ENCODE measurements at regions of chr16 and their contacts with region 1.

Region 1: GRCh38 chr16:69861292-69862030 is 89.7 kb upstream of the CLEC18A start:
- DNase-seq: peak; percentile 50
- H3K4me3 ChIP-seq: no peak overlapping the region
- H3K27ac ChIP-seq: peak overlapping the region; percentile 30 to 70
- H3K4me1 ChIP-seq: peaks cover 2% of the 10 kb centered on the region
- H3K27me3 ChIP-seq: no peaks in the 10 kb centered on the region
- CTCF ChIP-seq: no peak
- POLR2A ChIP-seq: no peak

Region 2: DNA sequence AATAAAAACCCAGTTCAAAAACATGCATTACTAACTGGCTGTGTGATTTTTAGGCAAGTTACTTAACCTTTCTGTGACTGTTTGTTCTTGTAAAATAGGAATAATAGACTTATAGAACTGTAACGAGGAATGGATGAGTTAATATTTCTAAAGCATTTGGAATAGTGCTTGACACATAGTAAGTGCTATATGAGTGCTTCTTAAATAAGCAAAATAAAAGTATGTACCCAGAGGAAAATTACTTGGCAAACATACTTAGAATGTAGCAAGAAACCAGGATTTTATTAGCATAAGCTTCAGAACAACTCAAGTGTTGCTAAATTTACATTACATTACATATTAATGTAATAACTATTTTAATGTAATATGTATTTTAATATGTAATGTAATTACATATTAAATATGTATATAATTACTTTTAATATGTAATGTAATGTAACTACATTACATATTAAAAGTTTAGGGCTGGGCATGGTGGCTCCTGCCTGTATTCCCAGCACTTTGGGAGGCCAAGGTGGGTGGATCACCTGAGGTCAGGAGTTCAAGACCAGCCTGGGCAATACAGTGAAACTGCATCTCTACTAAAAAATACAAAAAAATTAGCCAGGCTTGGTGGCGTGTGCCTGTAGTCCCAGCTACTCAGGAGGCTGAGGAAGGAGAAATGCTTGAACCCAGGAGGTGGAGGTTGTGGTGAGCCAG is 281.5 kb before region 1 on chr16:
- intact Hi-C with region 1: loop called (anchors 10 kb)
- DNase-seq: no peak
- H3K4me3 ChIP-seq: no peak overlapping the region
- H3K27ac ChIP-seq: no peak overlapping the region
- H3K4me1 ChIP-seq: no peaks in the 10 kb centered on the region
- H3K27me3 ChIP-seq: no peaks in the 10 kb centered on the region
- CTCF ChIP-seq: no peak
- POLR2A ChIP-seq: no peak

Region 3: GRCh38 chr16:69796351-69797118 is 64.9 kb before region 1 on chr16:
- intact Hi-C with region 1: loop called (anchors 5 kb)
- DNase-seq: peak; percentile 36
- H3K4me3 ChIP-seq: no peak overlapping the region
- H3K27ac ChIP-seq: no peak overlapping the region
- H3K4me1 ChIP-seq: no peaks in the 10 kb centered on the region
- H3K27me3 ChIP-seq: no peaks in the 10 kb centered on the region
- CTCF ChIP-seq: peak; percentile 80 to 94 (median 90)
- POLR2A ChIP-seq: no peak

Region 4: DNA sequence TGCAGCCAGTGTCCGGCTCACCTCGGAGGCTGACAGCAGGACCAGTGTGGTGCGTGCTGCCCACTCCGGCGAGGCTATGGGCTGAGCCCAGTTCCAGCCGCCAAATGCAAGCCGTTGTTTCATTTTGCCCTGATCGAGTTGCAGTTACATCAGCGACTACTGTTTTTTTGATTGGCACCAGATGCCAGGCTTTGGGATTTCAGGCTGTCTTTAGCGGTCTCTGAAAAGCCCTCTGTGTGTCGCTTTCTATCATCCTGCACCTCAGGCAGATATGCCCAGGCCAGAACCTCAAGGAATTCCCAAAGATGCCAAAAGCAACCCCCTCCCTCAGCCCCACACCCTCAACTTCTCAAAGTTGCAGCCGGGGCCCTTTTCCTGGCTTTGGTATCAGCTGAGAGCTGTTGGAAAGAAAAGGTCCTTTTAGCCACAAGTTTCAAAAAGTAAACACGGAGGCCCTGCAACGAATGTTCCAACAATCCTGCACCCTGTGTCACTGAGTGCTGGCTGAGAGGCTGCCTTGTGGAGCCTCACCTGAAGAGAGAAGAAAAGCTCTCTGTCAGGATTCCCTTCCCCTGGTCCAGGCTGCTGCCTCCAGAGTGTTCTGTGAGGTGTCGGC is 40.4 kb before region 1 on chr16:
- intact Hi-C with region 1: no loop called
- DNase-seq: peak; percentile 31
- H3K4me3 ChIP-seq: no peak overlapping the region
- H3K27ac ChIP-seq: peak overlapping the region; percentile 17 to 27
- H3K4me1 ChIP-seq: peaks cover 6% of the 10 kb centered on the region
- H3K27me3 ChIP-seq: no peaks in the 10 kb centered on the region
- CTCF ChIP-seq: no peak
- POLR2A ChIP-seq: no peak

Region 5: DNA sequence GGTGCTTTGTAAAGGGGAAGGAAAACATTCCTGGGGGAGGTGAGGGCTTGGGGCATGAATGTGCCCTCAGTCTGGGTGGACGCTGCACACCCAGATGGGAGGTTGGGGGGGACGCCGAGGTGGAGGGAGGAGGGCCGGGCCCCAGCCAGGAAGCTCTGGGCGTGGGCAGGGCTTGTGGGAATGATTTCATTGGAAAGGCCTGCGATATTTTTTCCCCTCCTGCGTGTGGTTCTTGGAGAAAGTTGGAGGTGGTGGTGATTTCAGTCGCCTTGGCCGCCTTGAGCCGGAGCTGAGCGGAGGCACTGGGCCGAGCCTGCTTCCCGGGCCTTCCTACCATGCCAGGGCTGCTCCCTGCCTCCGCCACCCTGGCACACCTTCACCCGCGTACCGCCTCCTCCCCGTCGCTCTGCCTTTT is 63.3 kb after region 1 on chr16:
- intact Hi-C with region 1: loop called (anchors 5 kb)
- DNase-seq: no peak
- H3K4me3 ChIP-seq: no peak overlapping the region
- H3K27ac ChIP-seq: peak overlapping the region in 1 of 2 donors; percentile 44
- H3K4me1 ChIP-seq: no peaks in the 10 kb centered on the region
- H3K27me3 ChIP-seq: no peaks in the 10 kb centered on the region
- CTCF ChIP-seq: no peak
- POLR2A ChIP-seq: no peak